ENCODE measurements at regions of chr9 and their contacts with region 1.

Region 1: DNA sequence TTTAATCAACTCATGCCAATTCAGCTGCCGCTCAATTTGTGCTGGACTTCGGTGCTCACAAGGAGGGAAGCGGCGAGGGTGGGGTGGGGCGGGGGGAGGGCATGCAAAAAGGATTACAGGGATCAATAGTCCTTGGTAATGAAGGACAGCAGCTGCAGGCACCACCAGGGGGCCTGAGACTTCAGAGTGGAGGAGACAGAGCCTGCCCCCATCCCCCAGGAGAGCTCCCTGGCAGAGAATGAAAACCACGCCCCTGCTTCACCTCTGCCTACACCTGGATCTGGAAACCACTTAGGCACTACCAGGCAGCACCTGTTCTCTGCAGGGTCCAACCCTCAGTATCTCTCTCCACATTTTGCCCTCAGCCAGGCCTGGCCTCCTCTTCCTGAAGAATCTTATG is 155.6 kb downstream of the TRIM32 start:
- DNase-seq: no peak
- ATAC-seq: no peak
- H3K4me3 ChIP-seq: no peak overlapping the region
- H3K27ac ChIP-seq: no peak overlapping the region
- H3K4me1 ChIP-seq: no peaks in the 10 kb centered on the region
- H3K27me3 ChIP-seq: peaks cover 0 to 4% (median 0%) of the 10 kb centered on the region in 7 donors
- CTCF ChIP-seq: no peak

Region 2: GRCh38 chr9:116749176-116749575 is 93.5 kb before region 1 on chr9:
- intact Hi-C with region 1: no loop called
- DNase-seq: no peak
- ATAC-seq: no peak
- H3K4me3 ChIP-seq: no peak overlapping the region
- H3K27ac ChIP-seq: no peak overlapping the region
- H3K4me1 ChIP-seq: no peaks in the 10 kb centered on the region
- H3K27me3 ChIP-seq: peaks cover 0 to 3% (median 0%) of the 10 kb centered on the region in 7 donors
- CTCF ChIP-seq: no peak

Region 3: DNA sequence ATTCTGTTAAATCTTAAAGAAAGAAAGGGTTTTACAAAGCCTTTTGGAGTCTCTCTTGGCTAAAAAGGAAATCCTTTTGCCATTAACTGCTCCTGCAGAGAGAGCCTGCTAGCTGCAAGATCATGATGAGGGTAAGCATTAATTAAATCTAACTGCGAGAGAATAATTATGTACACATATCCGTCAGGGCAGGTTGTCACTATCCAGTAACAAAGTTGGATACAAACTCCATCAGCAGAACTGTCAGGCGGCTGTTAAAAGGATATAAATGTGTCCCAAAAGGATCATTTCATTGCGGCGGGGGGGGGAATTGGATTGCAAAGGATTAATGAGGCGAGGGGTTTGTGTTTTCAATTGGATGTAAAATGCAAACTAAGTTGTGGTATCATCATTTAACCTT is 282.9 kb after region 1 on chr9:
- intact Hi-C with region 1: loop called in 1 of 10 experiments (anchors 5 kb)
- DNase-seq: no peak
- ATAC-seq: no peak
- H3K4me3 ChIP-seq: no peak overlapping the region
- H3K27ac ChIP-seq: no peak overlapping the region
- H3K4me1 ChIP-seq: no peaks in the 10 kb centered on the region
- H3K27me3 ChIP-seq: no peaks in the 10 kb centered on the region
- CTCF ChIP-seq: no peak

Measured in heart right ventricle (tissue), 16 donors.